PC-3 (cell line): ENCODE measurements at regions of chr2 and their contacts with region 1.

Region 1: GRCh38 chr2:174259981-174260380 is 11.6 kb upstream of the OLA1 start:
- DNase-seq: peak; percentile 53
- ATAC-seq: no peak
- H3K4me3 ChIP-seq: no peak overlapping the region
- H3K27ac ChIP-seq: no peak overlapping the region
- H3K4me1 ChIP-seq: peaks cover 11% of the 10 kb centered on the region
- H3K27me3 ChIP-seq: no peaks in the 10 kb centered on the region
- CTCF ChIP-seq: no peak

Region 2: GRCh38 chr2:174158003-174158402 is 102.0 kb before region 1 on chr2:
- CTCF ChIA-PET with region 1: interaction called, 11 read pairs
- POLR2A ChIA-PET with region 1: no interaction called
- intact Hi-C with region 1: no loop called
- DNase-seq: peak; percentile 70
- ATAC-seq: peak; percentile 88
- H3K4me3 ChIP-seq: no peak overlapping the region
- H3K27ac ChIP-seq: no peak overlapping the region
- H3K4me1 ChIP-seq: no peaks in the 10 kb centered on the region
- H3K27me3 ChIP-seq: no peaks in the 10 kb centered on the region
- CTCF ChIP-seq: peak; percentile 87

Region 3: GRCh38 chr2:174334781-174335251 is 74.8 kb after region 1 on chr2 and contains the start of gene SP9:
- CTCF ChIA-PET with region 1: no interaction called
- POLR2A ChIA-PET with region 1: no interaction called
- intact Hi-C with region 1: loop called (anchors 5 kb)
- DNase-seq: no peak
- ATAC-seq: no peak
- H3K4me3 ChIP-seq: peak within 1 kb of the TSS; percentile 78
- H3K27ac ChIP-seq: no peak within 1 kb of the TSS
- H3K4me1 ChIP-seq: peaks cover 4% of the 10 kb centered on the region; the same call in 1 of the 2 replicates
- H3K27me3 ChIP-seq: no peaks in the 10 kb centered on the region
- CTCF ChIP-seq: no peak
- total RNA-seq, gene SP9: not detected in 2 replicates